Mammary epithelial cell (primary cell): ENCODE measurements at regions of chr13 and their contacts with region 1.

Region 1: GRCh38 chr13:59690857-59691500 is 472.7 kb downstream of the DIAPH3 start:
- DNase-seq: no peak
- H3K4me3 ChIP-seq: no peak overlapping the region
- H3K27ac ChIP-seq: no peak overlapping the region
- H3K4me1 ChIP-seq: no peaks in the 10 kb centered on the region
- H3K27me3 ChIP-seq: no peaks in the 10 kb centered on the region
- CTCF ChIP-seq: no peak

Region 2: DNA sequence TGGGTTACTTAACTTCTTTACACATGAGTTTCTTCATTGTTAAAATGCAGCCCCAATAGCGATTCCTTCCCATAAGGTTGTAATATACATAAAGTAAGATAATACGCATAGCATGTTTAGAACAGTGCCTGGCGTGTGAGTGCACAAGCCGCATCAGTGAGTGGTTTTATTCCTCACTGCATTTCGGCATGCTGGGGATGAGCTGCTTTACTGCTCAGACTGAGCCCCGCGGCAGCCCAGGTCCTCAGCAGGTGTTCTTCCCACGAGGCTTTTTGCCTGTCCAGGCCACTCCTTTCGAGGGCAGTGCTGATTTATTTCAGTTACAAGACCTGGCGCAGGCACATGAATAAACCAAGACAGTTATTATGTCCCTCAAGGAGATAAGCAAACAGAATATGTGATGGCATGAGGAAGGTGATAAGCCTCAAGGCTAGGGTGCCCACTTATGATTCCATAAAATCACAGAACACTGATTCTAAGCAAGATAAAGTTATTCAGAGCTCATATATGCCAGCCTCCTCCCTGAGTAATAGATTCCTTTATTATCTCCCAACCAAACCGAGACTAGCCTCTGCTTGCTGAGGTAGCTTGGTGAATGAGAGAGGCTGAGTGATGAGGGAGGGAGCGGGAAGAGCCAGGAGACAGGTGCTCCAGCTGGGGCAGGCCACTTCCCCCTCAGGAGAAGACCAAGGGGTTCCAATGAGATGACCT is 32.8 kb before region 1 on chr13:
- CTCF ChIA-PET with region 1: no interaction called
- dilution Hi-C with region 1: no loop called
- in situ Hi-C with region 1: no loop called
- intact Hi-C with region 1: no loop called
- DNase-seq: peak; percentile 9
- H3K4me3 ChIP-seq: no peak overlapping the region
- H3K27ac ChIP-seq: no peak overlapping the region
- H3K4me1 ChIP-seq: no peaks in the 10 kb centered on the region
- H3K27me3 ChIP-seq: no peaks in the 10 kb centered on the region
- CTCF ChIP-seq: no peak

Region 3: DNA sequence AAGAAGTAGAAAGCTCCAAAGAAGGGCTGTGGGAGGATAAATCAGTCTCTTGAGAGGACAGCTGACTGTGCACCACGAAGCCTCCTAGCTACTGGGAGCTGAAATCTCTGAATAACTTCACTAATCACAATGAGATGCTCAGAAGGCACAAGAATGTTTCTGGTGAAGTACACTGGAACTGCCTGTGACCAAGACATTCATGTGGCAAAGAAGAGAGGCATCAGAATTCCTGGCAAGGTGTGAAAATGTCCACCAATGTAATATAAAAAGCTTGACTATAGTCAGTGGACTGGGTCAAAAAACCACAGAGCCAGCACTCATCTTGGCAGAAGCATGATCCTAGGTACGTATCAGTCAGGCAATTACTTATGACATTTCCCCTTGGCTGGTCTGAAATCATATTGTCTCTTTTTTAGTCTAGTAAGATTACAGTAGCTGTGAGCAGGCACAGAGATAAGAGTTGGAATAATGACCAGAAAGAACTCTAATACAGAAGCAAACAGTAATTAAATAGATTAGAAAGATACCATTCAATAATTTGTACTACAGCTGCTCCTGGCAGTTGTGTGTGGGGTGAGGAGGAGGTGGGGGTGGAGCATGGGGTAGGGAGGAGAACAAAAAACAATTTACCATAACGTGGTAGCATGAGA is 38.0 kb after region 1 on chr13:
- CTCF ChIA-PET with region 1: no interaction called
- dilution Hi-C with region 1: no loop called
- in situ Hi-C with region 1: no loop called
- intact Hi-C with region 1: no loop called
- DNase-seq: no peak
- H3K4me3 ChIP-seq: no peak overlapping the region
- H3K27ac ChIP-seq: no peak overlapping the region
- H3K4me1 ChIP-seq: no peaks in the 10 kb centered on the region
- H3K27me3 ChIP-seq: no peaks in the 10 kb centered on the region
- CTCF ChIP-seq: no peak

Region 4: GRCh38 chr13:59890054-59890453 is 199.1 kb after region 1 on chr13:
- CTCF ChIA-PET with region 1: no interaction called
- dilution Hi-C with region 1: no loop called
- in situ Hi-C with region 1: loop called in 1 of 2 experiments (anchors 10 kb)
- intact Hi-C with region 1: no loop called
- DNase-seq: no peak
- H3K4me3 ChIP-seq: no peak overlapping the region
- H3K27ac ChIP-seq: no peak overlapping the region
- H3K4me1 ChIP-seq: no peaks in the 10 kb centered on the region
- H3K27me3 ChIP-seq: no peaks in the 10 kb centered on the region
- CTCF ChIP-seq: no peak